ENCODE measurements at regions of chr2 and their contacts with region 1.

Region 1: DNA sequence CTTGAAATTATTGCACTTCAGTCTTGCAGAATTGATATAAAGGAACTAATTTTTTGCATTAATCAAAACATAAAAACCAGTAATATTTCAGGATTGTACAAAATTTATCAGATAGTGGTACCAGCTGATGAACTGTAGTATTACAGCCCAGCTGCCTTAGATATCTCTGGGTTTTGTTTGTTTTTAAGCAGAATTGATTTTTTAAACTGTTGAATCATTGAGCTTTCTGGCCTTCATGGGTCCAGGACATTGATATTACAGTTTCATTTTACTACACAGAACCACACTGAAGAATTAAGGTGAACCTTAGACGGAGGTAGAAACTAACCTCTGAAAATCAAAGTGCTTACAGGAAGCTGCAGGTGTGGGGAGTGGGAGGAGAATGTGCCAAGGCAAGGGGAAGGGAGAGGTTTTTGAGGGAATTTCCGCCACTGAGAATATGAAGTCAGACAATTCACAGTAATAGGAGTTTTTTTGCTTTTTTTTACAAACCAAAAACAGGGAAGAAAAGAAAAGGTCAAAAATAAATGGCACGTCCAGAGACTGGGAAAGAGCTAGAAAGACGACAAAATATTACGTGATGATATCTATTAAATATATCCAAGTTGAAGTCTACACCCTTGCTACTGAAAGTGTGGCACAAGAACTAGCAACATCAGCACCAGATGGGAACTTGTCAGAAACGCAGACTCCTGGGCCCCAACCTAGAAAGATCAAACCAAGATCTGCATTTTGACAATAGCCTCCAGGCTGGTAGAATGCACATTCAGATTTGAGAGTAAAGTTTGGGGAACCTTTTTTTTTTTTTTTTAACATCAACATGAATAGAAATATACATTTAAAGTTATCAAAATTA is 40.8 kb upstream of the SPAG16 start:
- DNase-seq: no peak
- ATAC-seq: no peak
- H3K4me3 ChIP-seq: no peak overlapping the region
- H3K4me3 Mint-ChIP-seq: no peak overlapping the region
- H3K27ac ChIP-seq: peak overlapping the region in 1 of 2 donors; percentile 36
- H3K27ac Mint-ChIP-seq: peak overlapping the region; percentile 46
- H3K4me1 ChIP-seq: peaks cover 5 to 12% of the 10 kb centered on the region in 2 donors
- H3K4me1 Mint-ChIP-seq: peaks cover 23% of the 10 kb centered on the region
- H3K27me3 ChIP-seq: no peaks in the 10 kb centered on the region
- H3K27me3 Mint-ChIP-seq: peaks cover 9% of the 10 kb centered on the region
- CTCF ChIP-seq: no peak

Region 2: DNA sequence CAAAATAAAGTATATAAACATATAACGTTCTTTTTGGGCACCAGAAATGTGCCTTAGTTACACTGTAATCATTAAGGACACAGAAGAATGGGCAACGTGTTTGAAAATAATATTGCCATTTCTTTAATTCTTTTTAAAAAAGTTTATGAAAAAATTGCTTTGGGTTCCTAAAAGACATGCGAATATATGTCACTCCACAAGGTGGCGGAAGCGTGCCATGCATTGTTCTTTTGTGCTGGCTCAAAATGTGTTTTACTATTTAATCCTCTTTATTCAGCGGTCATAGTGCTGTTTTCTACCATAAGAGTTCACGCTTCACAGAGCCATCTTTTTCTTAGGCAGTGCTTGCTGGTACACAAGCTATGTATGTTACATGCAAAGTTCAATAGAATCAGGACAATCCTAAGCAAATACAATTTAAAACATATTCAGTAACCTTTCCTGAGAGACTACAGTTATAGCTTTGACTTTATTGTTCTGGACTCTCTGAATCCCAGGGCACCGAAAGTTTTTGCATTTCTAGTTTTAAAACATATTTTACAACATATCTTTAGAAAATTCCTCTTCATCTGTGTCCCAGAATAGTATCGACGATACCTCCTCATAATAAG is 557.0 kb before region 1 on chr2:
- CTCF ChIA-PET with region 1: no interaction called
- POLR2A ChIA-PET with region 1: no interaction called
- intact Hi-C with region 1: loop called (anchors 5 kb)
- DNase-seq: peak; percentile 65
- ATAC-seq: peak; percentile 64
- H3K4me3 ChIP-seq: no peak overlapping the region
- H3K4me3 Mint-ChIP-seq: no peak overlapping the region
- H3K27ac ChIP-seq: no peak overlapping the region
- H3K27ac Mint-ChIP-seq: no peak overlapping the region
- H3K4me1 ChIP-seq: no peaks in the 10 kb centered on the region
- H3K4me1 Mint-ChIP-seq: peaks cover 2% of the 10 kb centered on the region
- H3K27me3 ChIP-seq: no peaks in the 10 kb centered on the region
- H3K27me3 Mint-ChIP-seq: peaks cover under 1% of the 10 kb centered on the region
- CTCF ChIP-seq: peak; percentile 97

Region 3: DNA sequence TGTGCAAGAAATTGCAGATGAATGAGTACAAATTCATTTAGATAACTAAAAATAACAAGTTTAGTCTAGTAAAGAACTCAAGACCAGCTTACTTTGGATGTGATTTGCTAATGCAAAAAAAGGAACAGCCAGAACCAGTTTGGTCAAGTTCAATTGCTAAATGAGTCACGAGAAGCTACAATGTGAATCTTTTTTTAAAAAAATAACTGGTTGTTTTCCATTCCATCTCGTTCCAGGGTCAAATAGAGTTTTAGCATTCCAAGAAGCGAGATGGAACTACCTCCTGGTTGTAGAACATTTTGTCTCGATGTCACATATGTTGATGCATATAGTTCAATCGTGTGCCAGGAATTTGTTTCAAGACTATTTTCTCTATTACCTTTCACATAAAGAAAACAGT is 27.0 kb before region 1 on chr2:
- CTCF ChIA-PET with region 1: no interaction called
- POLR2A ChIA-PET with region 1: no interaction called
- intact Hi-C with region 1: no loop called
- DNase-seq: no peak
- ATAC-seq: no peak
- H3K4me3 ChIP-seq: no peak overlapping the region
- H3K4me3 Mint-ChIP-seq: no peak overlapping the region
- H3K27ac ChIP-seq: no peak overlapping the region
- H3K27ac Mint-ChIP-seq: no peak overlapping the region
- H3K4me1 ChIP-seq: no peaks in the 10 kb centered on the region
- H3K4me1 Mint-ChIP-seq: peaks cover 6% of the 10 kb centered on the region
- H3K27me3 ChIP-seq: no peaks in the 10 kb centered on the region
- H3K27me3 Mint-ChIP-seq: no peaks in the 10 kb centered on the region
- CTCF ChIP-seq: no peak

Region 4: GRCh38 chr2:213290501-213290900 is 47.1 kb after region 1 on chr2:
- CTCF ChIA-PET with region 1: no interaction called
- POLR2A ChIA-PET with region 1: no interaction called
- intact Hi-C with region 1: no loop called
- DNase-seq: no peak
- ATAC-seq: no peak
- H3K4me3 ChIP-seq: no peak overlapping the region
- H3K4me3 Mint-ChIP-seq: no peak overlapping the region
- H3K27ac ChIP-seq: no peak overlapping the region
- H3K27ac Mint-ChIP-seq: no peak overlapping the region
- H3K4me1 ChIP-seq: no peaks in the 10 kb centered on the region
- H3K4me1 Mint-ChIP-seq: peaks cover 8% of the 10 kb centered on the region
- H3K27me3 ChIP-seq: no peaks in the 10 kb centered on the region
- H3K27me3 Mint-ChIP-seq: no peaks in the 10 kb centered on the region
- CTCF ChIP-seq: no peak